ENCODE measurements at regions of chr19 and their contacts with region 1.

Region 1: GRCh38 chr19:48588670-48589399 is 17.7 kb upstream of the SPACA4 start:
- DNase-seq: peak; percentile 91
- CTCF ChIP-seq: peak; percentile 98

Region 2: GRCh38 chr19:48321622-48322591 is 266.9 kb before region 1 on chr19:
- CTCF ChIA-PET with region 1: interaction called, 12 read pairs
- POLR2A ChIA-PET with region 1: no interaction called
- DNase-seq: peak; percentile 95
- CTCF ChIP-seq: no peak

Region 3: GRCh38 chr19:48391107-48391986 is 197.5 kb before region 1 on chr19 and contains the start of gene KDELR1:
- CTCF ChIA-PET with region 1: interaction called, 10 read pairs
- POLR2A ChIA-PET with region 1: no interaction called
- DNase-seq: peak; percentile 92
- CTCF ChIP-seq: peak; percentile 91

Region 4: GRCh38 chr19:48501496-48502350 is 87.1 kb before region 1 on chr19:
- CTCF ChIA-PET with region 1: interaction called, 133 read pairs
- POLR2A ChIA-PET with region 1: no interaction called
- DNase-seq: peak; percentile 82
- CTCF ChIP-seq: no peak

Region 5: GRCh38 chr19:48602117-48602739 is 13.4 kb after region 1 on chr19:
- CTCF ChIA-PET with region 1: interaction called, 43 read pairs
- POLR2A ChIA-PET with region 1: no interaction called
- DNase-seq: no peak
- CTCF ChIP-seq: no peak

Measured in GM10248 (cell line).